ENCODE measurements at regions of chr4 and their contacts with region 1.

Region 1: GRCh38 chr4:155787113-155787710 is 28.4 kb downstream of the GUCY1B1 start:
- DNase-seq: no peak
- H3K4me3 Mint-ChIP-seq: no peak overlapping the region
- H3K27ac Mint-ChIP-seq: no peak overlapping the region
- H3K4me1 Mint-ChIP-seq: no peaks in the 10 kb centered on the region
- H3K27me3 Mint-ChIP-seq: peaks cover 6% of the 10 kb centered on the region

Region 2: DNA sequence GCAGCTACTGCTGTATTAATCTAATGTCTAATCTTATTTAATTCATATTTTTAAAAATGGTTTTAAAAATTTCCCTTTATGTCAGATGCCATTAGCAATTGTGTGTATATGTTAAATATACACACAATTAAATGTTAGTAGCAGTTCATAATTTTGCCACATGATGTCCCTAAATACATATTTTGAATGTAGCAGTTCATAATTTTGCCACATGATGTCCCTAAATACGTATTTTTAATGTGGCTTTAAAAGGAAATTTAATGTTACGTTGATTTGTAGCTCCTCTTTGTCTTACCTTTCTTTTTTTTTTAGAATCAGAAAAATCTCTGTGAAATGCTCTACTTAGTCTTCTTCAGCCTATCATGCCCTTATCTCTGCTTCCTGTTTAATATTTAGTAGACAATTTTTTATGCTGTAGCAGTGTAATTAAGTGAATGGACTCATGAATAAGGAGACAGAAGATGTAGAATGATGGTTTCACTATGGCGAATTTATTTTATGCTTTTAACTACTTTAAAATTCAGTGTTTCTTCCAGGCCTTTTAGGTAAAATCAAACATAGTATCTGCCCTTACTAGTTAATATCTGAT is 980.1 kb before region 1 on chr4:
- CTCF ChIA-PET with region 1: no interaction called
- intact Hi-C with region 1: loop called (anchors 1 kb)
- DNase-seq: no peak
- H3K4me3 Mint-ChIP-seq: no peak overlapping the region
- H3K27ac Mint-ChIP-seq: no peak overlapping the region
- H3K4me1 Mint-ChIP-seq: no peaks in the 10 kb centered on the region
- H3K27me3 Mint-ChIP-seq: peaks cover 5% of the 10 kb centered on the region

Region 3: GRCh38 chr4:155442267-155443105 is 344.7 kb before region 1 on chr4:
- CTCF ChIA-PET with region 1: interaction called, 4 read pairs
- intact Hi-C with region 1: loop called (anchors 1 kb)
- DNase-seq: peak; percentile 76
- H3K4me3 Mint-ChIP-seq: no peak overlapping the region
- H3K27ac Mint-ChIP-seq: no peak overlapping the region
- H3K4me1 Mint-ChIP-seq: no peaks in the 10 kb centered on the region
- H3K27me3 Mint-ChIP-seq: peaks cover 22% of the 10 kb centered on the region

Region 4: GRCh38 chr4:155529272-155529671 is 257.9 kb before region 1 on chr4:
- CTCF ChIA-PET with region 1: interaction called, 3 read pairs
- intact Hi-C with region 1: loop called (anchors 1 kb)
- DNase-seq: peak; percentile 16
- H3K4me3 Mint-ChIP-seq: no peak overlapping the region
- H3K27ac Mint-ChIP-seq: no peak overlapping the region
- H3K4me1 Mint-ChIP-seq: peaks cover 4% of the 10 kb centered on the region
- H3K27me3 Mint-ChIP-seq: no peaks in the 10 kb centered on the region

Region 5: GRCh38 chr4:155592179-155592937 is 194.9 kb before region 1 on chr4:
- CTCF ChIA-PET with region 1: no interaction called
- intact Hi-C with region 1: no loop called
- DNase-seq: no peak
- H3K4me3 Mint-ChIP-seq: no peak overlapping the region
- H3K27ac Mint-ChIP-seq: no peak overlapping the region
- H3K4me1 Mint-ChIP-seq: no peaks in the 10 kb centered on the region
- H3K27me3 Mint-ChIP-seq: peaks cover 5% of the 10 kb centered on the region

Region 6: DNA sequence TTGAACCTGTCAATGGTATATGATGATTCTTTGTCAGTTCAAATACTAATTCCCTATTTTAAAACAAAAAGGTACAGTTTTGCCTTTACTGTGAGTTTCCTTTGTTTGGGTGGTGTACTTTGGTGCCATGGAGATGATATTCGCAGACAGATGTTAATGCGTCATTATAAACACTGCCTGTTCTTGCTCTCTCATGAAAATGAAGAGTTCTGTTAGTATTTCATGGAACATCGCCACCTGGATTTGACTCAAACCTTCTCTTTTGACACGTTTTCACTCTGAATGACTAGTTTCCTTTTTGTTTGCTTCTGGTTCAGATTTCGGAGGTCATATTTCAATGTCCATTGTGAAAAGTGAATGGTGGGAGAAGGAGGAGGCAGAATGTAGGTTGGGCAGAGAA is 173.3 kb after region 1 on chr4:
- CTCF ChIA-PET with region 1: no interaction called
- intact Hi-C with region 1: no loop called
- DNase-seq: no peak
- H3K4me3 Mint-ChIP-seq: no peak overlapping the region
- H3K27ac Mint-ChIP-seq: no peak overlapping the region
- H3K4me1 Mint-ChIP-seq: peaks cover 6% of the 10 kb centered on the region
- H3K27me3 Mint-ChIP-seq: peaks cover 10% of the 10 kb centered on the region

Region 7: DNA sequence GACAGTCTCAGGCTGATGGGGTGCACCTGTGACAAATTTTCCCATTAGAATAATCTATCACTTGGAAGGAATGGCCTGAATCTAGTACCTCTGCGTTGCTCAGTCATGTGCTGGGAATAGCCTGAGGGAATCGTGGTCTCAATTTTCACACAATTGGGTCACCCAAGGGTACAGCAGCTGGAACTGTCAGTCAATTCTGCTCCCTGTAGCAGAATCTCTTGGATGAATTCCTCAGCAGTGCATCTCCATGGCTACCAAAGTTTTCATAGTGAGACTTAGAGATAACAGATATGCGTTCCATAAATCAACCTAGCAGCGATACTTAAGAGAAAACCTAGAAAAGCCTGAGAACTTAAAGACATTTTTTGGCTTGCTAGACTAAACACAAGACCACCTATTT is 455.2 kb after region 1 on chr4:
- CTCF ChIA-PET with region 1: no interaction called
- intact Hi-C with region 1: no loop called
- DNase-seq: no peak
- H3K4me3 Mint-ChIP-seq: no peak overlapping the region
- H3K27ac Mint-ChIP-seq: no peak overlapping the region
- H3K4me1 Mint-ChIP-seq: no peaks in the 10 kb centered on the region
- H3K27me3 Mint-ChIP-seq: no peaks in the 10 kb centered on the region

Region 8: GRCh38 chr4:157291071-157291470 is 1503.9 kb after region 1 on chr4:
- CTCF ChIA-PET with region 1: no interaction called
- intact Hi-C with region 1: no loop called
- DNase-seq: no peak
- H3K4me3 Mint-ChIP-seq: no peak overlapping the region
- H3K27ac Mint-ChIP-seq: no peak overlapping the region
- H3K4me1 Mint-ChIP-seq: no peaks in the 10 kb centered on the region
- H3K27me3 Mint-ChIP-seq: no peaks in the 10 kb centered on the region

Measured in activated naive CD4-positive, alpha-beta T cell treated with anti-CD3 and anti-CD28 coated beads for 36 hours (primary cell).